PC-3 (cell line): ENCODE measurements at regions of chr1 and their contacts with region 1.

Region 1: GRCh38 chr1:92310185-92310597 is 11.3 kb downstream of the RPAP2 start:
- DNase-seq: peak; percentile 75
- ATAC-seq: peak; percentile 97
- H3K4me3 ChIP-seq: no peak overlapping the region
- H3K27ac ChIP-seq: no peak overlapping the region
- H3K4me1 ChIP-seq: peaks cover 6% of the 10 kb centered on the region; the same call in 1 of the 2 replicates
- H3K27me3 ChIP-seq: no peaks in the 10 kb centered on the region
- CTCF ChIP-seq: peak; percentile 84

Region 2: GRCh38 chr1:92346866-92347640 is 36.9 kb after region 1 on chr1:
- CTCF ChIA-PET with region 1: no interaction called
- POLR2A ChIA-PET with region 1: interaction called, 28 read pairs
- intact Hi-C with region 1: no loop called
- DNase-seq: no peak
- ATAC-seq: no peak
- H3K4me3 ChIP-seq: no peak overlapping the region
- H3K27ac ChIP-seq: no peak overlapping the region
- H3K4me1 ChIP-seq: no peaks in the 10 kb centered on the region
- H3K27me3 ChIP-seq: no peaks in the 10 kb centered on the region
- CTCF ChIP-seq: no peak

Region 3: DNA sequence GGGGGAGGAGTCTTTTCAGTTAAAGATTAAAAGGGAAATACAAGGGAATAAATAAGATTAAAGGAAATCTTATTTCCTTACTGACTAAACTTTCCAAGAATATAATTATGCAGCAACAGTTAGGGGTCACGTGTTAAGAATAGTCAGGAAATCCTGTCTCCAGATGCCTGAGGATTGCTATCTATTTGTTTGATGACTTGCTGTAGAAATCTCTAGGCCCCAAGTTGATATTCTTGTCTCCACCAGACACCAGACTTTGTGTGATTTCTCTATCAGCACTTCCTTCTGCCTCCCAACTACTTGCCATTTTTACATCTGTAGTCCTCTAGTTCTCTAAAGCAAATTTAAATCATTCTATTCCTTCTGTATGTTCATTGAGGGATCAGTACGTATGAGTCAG is 66.2 kb after region 1 on chr1:
- CTCF ChIA-PET with region 1: no interaction called
- POLR2A ChIA-PET with region 1: no interaction called
- intact Hi-C with region 1: no loop called
- DNase-seq: no peak
- ATAC-seq: no peak; the same call in 1 of the 2 replicates
- H3K4me3 ChIP-seq: no peak overlapping the region
- H3K27ac ChIP-seq: no peak overlapping the region
- H3K4me1 ChIP-seq: no peaks in the 10 kb centered on the region
- H3K27me3 ChIP-seq: no peaks in the 10 kb centered on the region
- CTCF ChIP-seq: no peak

Region 4: DNA sequence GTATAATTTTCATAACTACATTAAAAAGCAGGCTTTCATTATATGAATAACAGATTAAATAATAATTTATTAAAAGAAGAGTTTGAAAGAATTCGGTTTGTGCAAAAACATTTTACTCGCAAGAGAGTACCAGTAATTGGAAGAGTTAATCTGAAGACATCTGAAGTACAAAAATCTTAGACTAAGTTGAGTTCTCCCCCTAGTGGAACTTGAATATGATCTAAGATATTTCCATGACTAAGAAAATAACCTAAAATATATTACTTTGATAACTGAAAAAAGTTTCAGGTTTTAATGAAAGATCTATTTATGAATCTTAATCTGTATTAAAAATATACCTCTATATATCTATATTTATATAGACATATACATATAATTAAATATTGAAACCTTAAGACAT is 289.0 kb after region 1 on chr1:
- CTCF ChIA-PET with region 1: no interaction called
- POLR2A ChIA-PET with region 1: no interaction called
- intact Hi-C with region 1: loop called (anchors 5 kb)
- DNase-seq: peak; percentile 56
- ATAC-seq: no peak
- H3K4me3 ChIP-seq: no peak overlapping the region
- H3K27ac ChIP-seq: no peak overlapping the region
- H3K4me1 ChIP-seq: no peaks in the 10 kb centered on the region
- H3K27me3 ChIP-seq: no peaks in the 10 kb centered on the region
- CTCF ChIP-seq: peak; percentile 54; the same call in 1 of the 2 replicates

Region 5: GRCh38 chr1:92623187-92623778 is 313.1 kb after region 1 on chr1:
- CTCF ChIA-PET with region 1: interaction called, 3 read pairs
- POLR2A ChIA-PET with region 1: no interaction called
- intact Hi-C with region 1: loop called (anchors 1 kb)
- DNase-seq: peak; percentile 45
- ATAC-seq: peak; percentile 64
- H3K4me3 ChIP-seq: no peak overlapping the region
- H3K27ac ChIP-seq: no peak overlapping the region
- H3K4me1 ChIP-seq: no peaks in the 10 kb centered on the region
- H3K27me3 ChIP-seq: no peaks in the 10 kb centered on the region
- CTCF ChIP-seq: peak; percentile 67